Heart right ventricle (tissue), 16 donors: ENCODE measurements at regions of chr10 and their contacts with region 1.

Region 1: GRCh38 chr10:125329056-125329455 is 168.7 kb upstream of the CTBP2 start:
- DNase-seq: no peak
- ATAC-seq: no peak
- H3K4me3 ChIP-seq: no peak overlapping the region
- H3K27ac ChIP-seq: no peak overlapping the region
- H3K4me1 ChIP-seq: peaks cover 0 to 20% (median 0%) of the 10 kb centered on the region in 9 donors
- H3K27me3 ChIP-seq: no peaks in the 10 kb centered on the region
- CTCF ChIP-seq: no peak

Region 2: DNA sequence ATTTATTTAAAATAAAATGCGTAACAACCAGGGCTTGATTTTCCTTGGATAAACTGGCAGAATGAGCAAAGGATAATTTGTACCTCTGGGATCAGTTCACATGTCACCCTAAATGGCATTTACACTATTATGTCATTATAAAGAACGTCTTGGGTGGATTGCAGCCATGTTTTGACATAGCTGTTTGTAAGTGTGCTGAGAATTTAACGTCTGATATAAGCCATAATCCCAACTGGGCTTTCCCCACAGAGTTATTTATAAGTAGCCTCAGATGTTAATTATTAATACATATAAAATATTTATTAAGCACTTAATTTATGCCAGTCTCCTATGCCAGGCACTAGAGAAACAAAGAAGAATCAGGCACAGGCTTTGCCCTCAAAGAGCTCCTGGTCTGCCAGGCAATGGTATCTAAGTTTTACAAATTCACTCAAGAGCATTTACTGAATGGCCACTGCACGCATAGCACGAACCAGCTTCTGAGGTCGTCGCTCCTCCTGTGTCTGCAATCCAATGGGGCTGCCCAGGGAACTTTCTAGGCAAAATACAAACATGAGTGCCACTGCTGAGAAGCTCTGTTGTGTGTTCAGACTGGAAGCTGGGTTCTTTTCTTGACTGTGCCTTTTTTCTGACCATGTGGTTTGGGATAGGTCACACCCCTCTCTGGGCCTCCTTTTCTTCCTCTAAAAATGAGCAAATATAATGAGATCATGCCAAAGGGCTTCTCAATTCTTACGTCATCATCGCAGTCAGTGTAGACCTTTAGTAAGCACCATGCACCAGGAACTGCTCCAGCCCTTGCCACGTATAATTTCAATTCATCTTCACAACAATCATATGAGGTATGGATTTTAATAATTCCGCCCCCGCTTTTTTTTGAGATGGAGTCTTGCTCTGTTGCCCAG is 157.4 kb before region 1 on chr10:
- intact Hi-C with region 1: loop called in 1 of 10 experiments (anchors 10 kb)
- DNase-seq: no peak
- ATAC-seq: no peak
- H3K4me3 ChIP-seq: no peak overlapping the region
- H3K27ac ChIP-seq: no peak overlapping the region
- H3K4me1 ChIP-seq: no peaks in the 10 kb centered on the region
- H3K27me3 ChIP-seq: peaks cover 0 to 10% (median 5%) of the 10 kb centered on the region in 7 donors
- CTCF ChIP-seq: no peak

Region 3: DNA sequence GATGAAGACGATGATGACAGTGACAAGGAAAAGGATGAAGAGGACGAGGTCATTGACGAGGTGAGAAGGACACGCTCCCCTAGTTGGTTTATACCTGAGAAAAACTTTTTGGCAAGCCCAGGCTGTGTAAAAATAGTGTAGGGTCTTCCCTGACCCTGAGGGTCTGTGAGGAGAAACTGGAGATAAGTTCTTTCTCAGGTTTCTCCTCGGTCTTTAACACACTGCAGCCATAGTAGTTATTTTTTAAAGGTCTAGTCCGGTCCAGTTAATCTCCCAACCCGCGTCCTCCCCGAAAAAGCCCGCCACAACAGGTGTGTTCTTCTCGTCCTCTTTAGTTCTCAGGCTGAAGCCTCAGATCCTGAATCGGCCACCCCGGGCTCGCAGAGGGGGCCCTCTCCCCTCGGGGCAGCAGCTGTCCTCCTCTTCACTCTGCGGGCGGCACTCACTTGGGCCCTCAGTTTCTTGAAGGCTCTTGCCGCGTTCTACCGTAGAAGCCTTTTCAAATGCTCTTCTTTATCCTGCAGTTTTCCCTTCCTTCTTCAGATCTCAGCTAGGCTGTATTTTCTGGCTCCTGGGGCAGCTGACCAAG is 494.7 kb after region 1 on chr10:
- intact Hi-C with region 1: no loop called
- DNase-seq: no peak
- ATAC-seq: peak in 4 of 8 donors; percentile 3 to 23 (median 10)
- H3K4me3 ChIP-seq: peak overlapping the region; percentile 76 to 100 (median 93)
- H3K27ac ChIP-seq: peak overlapping the region; percentile 80 to 99 (median 91)
- H3K4me1 ChIP-seq: peaks cover 15 to 47% (median 32%) of the 10 kb centered on the region in 9 donors
- H3K27me3 ChIP-seq: no peaks in the 10 kb centered on the region
- CTCF ChIP-seq: no peak